ENCODE measurements at regions of chr19 and their contacts with region 1.

Region 1: GRCh38 chr19:10936661-10937084 is 8.1 kb downstream of the TIMM29 start:
- DNase-seq: peak; percentile 76
- ATAC-seq: peak; percentile 77
- H3K4me3 ChIP-seq: peak overlapping the region; percentile 7 to 39 (median 22); a peak in 2 of 6 replicates
- H3K27ac ChIP-seq: peak overlapping the region; percentile 17
- H3K4me1 ChIP-seq: peaks cover 57% of the 10 kb centered on the region
- H3K27me3 ChIP-seq: no peaks in the 10 kb centered on the region
- CTCF ChIP-seq: peak; percentile 87
- EP300 ChIP-seq: no peak
- POLR2A ChIP-seq: no peak
- RAD21 ChIP-seq: peak; percentile 81

Region 2: GRCh38 chr19:10644260-10645007 is 292.2 kb before region 1 on chr19:
- CTCF ChIA-PET with region 1: no interaction called
- POLR2A ChIA-PET with region 1: no interaction called
- in situ Hi-C with region 1: no loop called
- intact Hi-C with region 1: no loop called
- DNase-seq: peak; percentile 74
- ATAC-seq: peak; percentile 84
- H3K4me3 ChIP-seq: peak overlapping the region; percentile 29 to 70 (median 44); a peak in 5 of 6 replicates
- H3K27ac ChIP-seq: peak overlapping the region; percentile 11
- H3K4me1 ChIP-seq: peaks cover 80% of the 10 kb centered on the region
- H3K27me3 ChIP-seq: no peaks in the 10 kb centered on the region
- CTCF ChIP-seq: peak; percentile 94
- EP300 ChIP-seq: no peak
- POLR2A ChIP-seq: no peak
- RAD21 ChIP-seq: peak; percentile 92

Region 3: DNA sequence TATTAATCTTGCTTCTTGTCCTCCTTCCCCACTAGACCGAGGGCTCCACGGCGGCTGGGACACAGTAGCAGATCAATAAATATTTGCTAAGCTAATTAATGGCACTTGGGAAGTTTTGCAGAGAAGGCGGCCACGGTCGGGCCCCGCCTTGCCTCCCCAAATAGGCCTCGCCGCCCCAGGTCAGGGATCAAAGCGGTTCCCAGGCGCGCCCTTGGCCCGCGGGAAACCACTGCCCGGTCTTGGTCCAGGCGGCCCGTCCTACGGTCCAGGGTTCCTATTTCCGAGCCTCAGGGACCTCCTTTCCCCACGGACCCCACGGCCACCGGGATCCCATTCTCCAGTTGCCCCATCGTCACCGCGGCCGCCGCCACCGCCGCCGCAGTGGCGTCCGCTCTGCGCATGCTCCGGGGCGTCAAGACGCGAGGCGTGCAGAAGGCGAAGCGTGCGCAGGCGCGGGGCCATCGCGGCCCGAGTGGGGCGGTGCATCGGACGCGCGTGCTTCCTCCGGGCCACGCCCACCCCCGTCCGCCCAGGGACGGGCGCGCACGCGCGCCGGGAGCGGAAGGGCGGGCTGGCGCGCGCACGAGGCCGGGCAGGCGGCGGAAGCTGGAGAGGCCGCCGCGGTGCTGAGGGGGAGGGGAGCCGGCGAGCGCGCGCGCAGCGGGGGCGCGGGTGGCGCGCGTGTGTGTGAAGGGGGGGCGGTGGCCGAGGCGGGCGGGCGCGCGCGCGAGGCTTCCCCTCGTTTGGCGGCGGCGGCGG is 23.8 kb after region 1 on chr19 and contains the start of gene SMARCA4:
- CTCF ChIA-PET with region 1: no interaction called
- POLR2A ChIA-PET with region 1: interaction called, 17 read pairs
- in situ Hi-C with region 1: no loop called
- intact Hi-C with region 1: no loop called
- DNase-seq: peak; percentile 88
- ATAC-seq: peak; percentile 81
- H3K4me3 ChIP-seq: peak within 1 kb of the TSS; percentile 74 to 97 (median 84)
- H3K27ac ChIP-seq: peak within 1 kb of the TSS; percentile 83
- H3K4me1 ChIP-seq: peaks cover 45% of the 10 kb centered on the region
- H3K27me3 ChIP-seq: no peaks in the 10 kb centered on the region
- CTCF ChIP-seq: no peak
- EP300 ChIP-seq: no peak
- POLR2A ChIP-seq: peak; percentile 77 to 86
- RAD21 ChIP-seq: no peak; the same call in 1 of the 2 replicates
- total RNA-seq, gene SMARCA4: 45.9 and 61.5 TPM in 2 replicates

Region 4: GRCh38 chr19:11018179-11018578 is 81.5 kb after region 1 on chr19:
- CTCF ChIA-PET with region 1: no interaction called
- POLR2A ChIA-PET with region 1: no interaction called
- in situ Hi-C with region 1: loop called (anchors 10 kb)
- intact Hi-C with region 1: loop called (anchors 5 kb)
- DNase-seq: no peak
- ATAC-seq: no peak
- H3K4me3 ChIP-seq: no peak overlapping the region
- H3K27ac ChIP-seq: no peak overlapping the region
- H3K4me1 ChIP-seq: no peaks in the 10 kb centered on the region
- H3K27me3 ChIP-seq: no peaks in the 10 kb centered on the region
- CTCF ChIP-seq: no peak
- EP300 ChIP-seq: no peak
- POLR2A ChIP-seq: no peak
- RAD21 ChIP-seq: no peak